Right cardiac atrium (tissue), 5 donors: ENCODE measurements at regions of chr16 and their contacts with region 1.

Region 1: GRCh38 chr16:69150146-69150865 is 17.9 kb downstream of the UTP4 start:
- DNase-seq: no peak
- ATAC-seq: peak; percentile 82 to 85
- H3K4me3 ChIP-seq: no peak overlapping the region
- H3K27ac ChIP-seq: no peak overlapping the region
- H3K4me1 ChIP-seq: no peaks in the 10 kb centered on the region
- H3K27me3 ChIP-seq: no peaks in the 10 kb centered on the region

Region 2: GRCh38 chr16:68921654-68922053 is 228.7 kb before region 1 on chr16:
- intact Hi-C with region 1: no loop called
- DNase-seq: no peak
- ATAC-seq: no peak
- H3K4me3 ChIP-seq: no peak overlapping the region
- H3K27ac ChIP-seq: no peak overlapping the region
- H3K4me1 ChIP-seq: no peaks in the 10 kb centered on the region
- H3K27me3 ChIP-seq: no peaks in the 10 kb centered on the region

Region 3: GRCh38 chr16:69286941-69287713 is 136.8 kb after region 1 on chr16:
- intact Hi-C with region 1: loop called (anchors 2 to 10 kb)
- DNase-seq: peak; percentile 78 to 88 (median 79)
- ATAC-seq: peak; percentile 79 to 90
- H3K4me3 ChIP-seq: no peak overlapping the region
- H3K27ac ChIP-seq: no peak overlapping the region
- H3K4me1 ChIP-seq: no peaks in the 10 kb centered on the region
- H3K27me3 ChIP-seq: no peaks in the 10 kb centered on the region